ENCODE measurements at regions of chr12 and their contacts with region 1.

Region 1: GRCh38 chr12:12716793-12717585 is at the start of gene CDKN1B:
- DNase-seq: peak; percentile 92 to 96 (median 94)
- ATAC-seq: peak; percentile 86 to 96 (median 94)
- H3K4me3 ChIP-seq: peak within 1 kb of the TSS; percentile 77 to 96 (median 92)
- H3K27ac ChIP-seq: peak within 1 kb of the TSS; percentile 96 to 100 (median 100)
- H3K4me1 ChIP-seq: peaks cover 0 to 62% (median 56%) of the 10 kb centered on the region in 12 donors
- H3K27me3 ChIP-seq: no peaks in the 10 kb centered on the region
- CTCF ChIP-seq: no peak
- POLR2A ChIP-seq: peak; percentile 65 to 80
- total RNA-seq, gene CDKN1B: 25.8 to 44.9 (median 35.1) TPM

Region 2: GRCh38 chr12:12505544-12506495 is 211.2 kb before region 1 on chr12:
- intact Hi-C with region 1: loop called in 1 of 10 experiments (anchors 5 kb)
- DNase-seq: no peak
- ATAC-seq: peak; percentile 55 to 86 (median 83)
- H3K4me3 ChIP-seq: peak overlapping the region in 9 of 12 donors; percentile 22 to 49 (median 32)
- H3K27ac ChIP-seq: peak overlapping the region; percentile 29 to 86 (median 72)
- H3K4me1 ChIP-seq: peaks cover 6 to 65% (median 44%) of the 10 kb centered on the region in 12 donors
- H3K27me3 ChIP-seq: no peaks in the 10 kb centered on the region
- CTCF ChIP-seq: no peak
- POLR2A ChIP-seq: no peak

Region 3: DNA sequence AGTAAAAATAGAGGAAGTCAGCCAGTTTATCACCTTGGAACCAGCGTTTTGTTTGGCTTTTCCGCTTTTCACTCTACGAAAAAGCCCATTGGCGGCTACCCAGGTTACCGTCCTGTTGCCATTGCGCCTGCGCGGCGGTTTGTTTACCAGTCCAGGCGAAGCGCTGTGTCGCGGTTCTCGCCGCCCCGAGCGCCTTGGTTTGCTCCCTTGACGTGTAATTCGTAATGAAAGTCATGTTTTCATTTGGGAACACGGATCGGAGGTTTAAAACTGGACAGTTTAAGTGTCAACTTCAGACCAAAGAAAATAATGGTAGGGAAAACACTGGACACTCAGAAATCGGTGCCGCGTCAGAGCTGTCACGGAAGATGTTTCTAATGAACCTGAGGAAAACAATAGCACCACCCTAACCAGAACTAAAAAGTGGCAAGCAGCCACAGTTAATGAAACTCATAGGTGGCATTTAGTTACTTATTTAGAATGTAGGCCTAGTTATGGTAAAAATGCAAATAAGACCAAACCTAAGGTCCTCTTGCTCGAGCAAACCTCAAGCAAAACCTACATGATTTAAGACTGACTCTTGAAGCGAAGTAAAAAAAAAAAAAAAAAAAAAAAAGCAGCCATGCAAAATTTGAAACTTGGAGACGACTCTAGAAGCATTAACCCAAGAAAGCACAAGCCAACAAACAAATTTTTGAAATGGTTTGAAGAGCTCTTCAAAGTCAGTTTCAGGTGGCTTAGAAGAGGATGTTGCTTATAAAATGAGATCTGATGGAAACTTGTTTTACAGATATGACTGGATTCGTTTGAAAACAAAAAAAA is 20.2 kb before region 1 on chr12:
- intact Hi-C with region 1: loop called in 3 of 10 experiments (anchors 1 to 2 kb)
- DNase-seq: peak; percentile 91 to 95 (median 93)
- ATAC-seq: peak; percentile 87 to 95 (median 92)
- H3K4me3 ChIP-seq: peak overlapping the region; percentile 15 to 73 (median 64)
- H3K27ac ChIP-seq: peak overlapping the region; percentile 90 to 99 (median 96)
- H3K4me1 ChIP-seq: peaks cover 0 to 23% (median 5%) of the 10 kb centered on the region in 12 donors
- H3K27me3 ChIP-seq: no peaks in the 10 kb centered on the region
- CTCF ChIP-seq: peak in 1 of 12 donors; percentile 16
- POLR2A ChIP-seq: peak in 1 of 2 donors; percentile 73

Region 4: GRCh38 chr12:12954356-12954755 is 237.4 kb after region 1 on chr12:
- intact Hi-C with region 1: no loop called
- DNase-seq: no peak
- ATAC-seq: no peak
- H3K4me3 ChIP-seq: no peak overlapping the region
- H3K27ac ChIP-seq: no peak overlapping the region
- H3K4me1 ChIP-seq: no peaks in the 10 kb centered on the region
- H3K27me3 ChIP-seq: no peaks in the 10 kb centered on the region
- CTCF ChIP-seq: no peak
- POLR2A ChIP-seq: no peak